Dorsolateral prefrontal cortex (tissue), 120 donors: ENCODE measurements at regions of chr17 and their contacts with region 1.

Region 1: GRCh38 chr17:42405963-42406495 is 17.0 kb downstream of the CAVIN1 start:
- DNase-seq: peak; percentile 80 to 89 (median 86)
- H3K4me3 ChIP-seq: no peak overlapping the region
- H3K27ac ChIP-seq: peak overlapping the region in 57 of 59 donors; percentile 48 to 99 (median 93)
- H3K27me3 ChIP-seq: peaks cover 0 to 4% (median 0%) of the 10 kb centered on the region in 45 donors
- CTCF ChIP-seq: peak; percentile 64 to 96 (median 89)

Region 2: GRCh38 chr17:42193969-42194899 is 211.8 kb before region 1 on chr17 and contains the start of gene GHDC:
- intact Hi-C with region 1: no loop called
- DNase-seq: peak; percentile 75 to 92 (median 90)
- H3K4me3 ChIP-seq: peak within 1 kb of the TSS; percentile 50 to 98 (median 85)
- H3K27ac ChIP-seq: peak within 1 kb of the TSS in 58 of 59 donors; percentile 5 to 95 (median 81)
- H3K27me3 ChIP-seq: no peaks in the 10 kb centered on the region
- CTCF ChIP-seq: peak in 26 of 56 donors; percentile 6 to 42 (median 19)
- total RNA-seq, gene GHDC: 17.6 to 38.2 (median 23.9) TPM

Region 3: GRCh38 chr17:42322382-42323267 is 83.4 kb before region 1 on chr17:
- intact Hi-C with region 1: loop called (anchors 1 to 2 kb)
- DNase-seq: peak; percentile 88 to 98 (median 94)
- H3K4me3 ChIP-seq: peak overlapping the region in 1 of 59 donors; percentile 17
- H3K27ac ChIP-seq: peak overlapping the region in 40 of 59 donors; percentile 0 to 79 (median 38)
- H3K27me3 ChIP-seq: no peaks in the 10 kb centered on the region
- CTCF ChIP-seq: peak; percentile 95 to 100 (median 100)

Region 4: DNA sequence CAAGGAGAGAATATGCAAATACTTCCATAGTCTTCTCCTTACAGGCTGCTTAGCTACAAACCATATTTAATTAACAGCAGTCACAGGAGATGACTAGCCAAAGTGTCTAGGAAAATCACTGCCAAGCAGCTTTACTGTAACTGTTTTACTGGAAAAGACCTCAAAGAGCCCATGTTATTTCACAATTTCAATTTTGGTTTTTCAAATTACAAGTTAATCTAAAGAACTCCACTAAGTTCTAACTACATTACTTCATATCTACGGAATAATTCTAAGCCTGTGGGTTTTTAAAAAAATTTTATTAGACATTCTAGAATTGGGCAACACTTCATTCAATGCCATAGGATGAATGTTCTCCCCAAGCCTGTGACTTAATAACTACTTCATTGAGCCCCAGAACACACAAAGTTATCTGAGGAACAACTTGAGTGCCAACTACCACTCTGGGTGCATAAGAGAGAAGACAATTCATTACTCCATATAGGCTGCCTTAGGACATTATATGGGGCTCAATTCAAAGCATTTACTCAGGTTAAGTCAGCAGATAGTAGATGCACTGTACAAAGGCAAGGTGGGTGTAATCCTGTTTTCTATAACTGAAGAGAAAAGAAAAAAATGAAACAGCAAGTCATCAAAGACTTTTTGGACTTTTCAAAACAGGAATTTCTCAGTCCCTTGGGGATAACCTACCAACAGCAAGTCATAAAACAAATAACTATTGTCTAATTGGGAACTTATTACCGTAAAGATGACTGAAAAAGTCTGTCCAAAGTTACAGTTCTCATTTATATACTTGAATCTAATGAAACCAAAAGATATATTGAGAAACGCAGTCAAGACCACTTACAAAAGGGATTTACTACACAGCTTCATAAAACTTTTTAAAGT is 50.8 kb before region 1 on chr17:
- intact Hi-C with region 1: no loop called
- DNase-seq: no peak
- H3K4me3 ChIP-seq: no peak overlapping the region
- H3K27ac ChIP-seq: peak overlapping the region in 1 of 59 donors; percentile 16
- H3K27me3 ChIP-seq: no peaks in the 10 kb centered on the region
- CTCF ChIP-seq: no peak

Region 5: DNA sequence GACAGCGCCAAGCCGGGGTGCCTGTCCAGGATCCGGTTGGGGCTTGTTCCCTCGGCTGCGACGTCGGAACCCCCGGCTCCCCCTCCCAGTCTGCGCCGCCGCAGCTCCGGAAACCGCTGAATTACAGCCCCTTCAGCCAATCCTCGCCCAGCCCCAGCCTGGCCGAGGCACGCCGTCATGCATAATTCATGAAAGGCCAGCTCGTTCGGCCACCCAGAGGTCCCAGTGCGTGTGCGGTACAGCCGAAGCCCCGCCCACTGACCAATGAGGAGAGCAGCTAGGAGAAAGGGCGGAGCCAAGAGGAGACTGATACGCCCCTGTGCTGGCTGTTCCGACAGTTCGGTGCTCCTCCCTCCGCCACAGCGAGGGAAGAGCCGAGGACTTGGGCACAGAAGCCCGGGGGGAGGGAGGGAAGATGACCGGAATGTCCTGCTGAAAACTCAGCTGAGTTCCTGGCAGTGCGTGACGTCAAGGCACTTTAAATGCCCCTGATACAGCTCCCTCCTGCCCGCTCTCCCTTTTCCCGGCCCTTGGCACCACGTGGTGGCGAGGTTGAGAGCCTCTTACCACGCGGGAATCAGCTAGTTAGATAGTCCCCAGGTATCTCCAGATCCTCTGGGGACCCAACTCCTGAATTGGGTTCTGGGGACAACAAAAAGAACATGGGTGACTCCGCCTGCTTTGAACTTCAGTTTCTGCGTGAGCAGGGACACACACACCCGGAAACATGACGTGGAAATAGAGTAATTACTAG is 17.5 kb before region 1 on chr17 and contains the start of gene STAT3:
- intact Hi-C with region 1: loop called in 1 of 2 experiments (anchors 2 kb)
- DNase-seq: peak; percentile 100
- H3K4me3 ChIP-seq: peak within 1 kb of the TSS; percentile 77 to 100 (median 95)
- H3K27ac ChIP-seq: peak within 1 kb of the TSS; percentile 70 to 100 (median 98)
- H3K27me3 ChIP-seq: no peaks in the 10 kb centered on the region
- CTCF ChIP-seq: peak in 33 of 56 donors; percentile 4 to 61 (median 28)
- total RNA-seq, gene STAT3: 57.7 to 203 (median 98.0) TPM

Region 6: DNA sequence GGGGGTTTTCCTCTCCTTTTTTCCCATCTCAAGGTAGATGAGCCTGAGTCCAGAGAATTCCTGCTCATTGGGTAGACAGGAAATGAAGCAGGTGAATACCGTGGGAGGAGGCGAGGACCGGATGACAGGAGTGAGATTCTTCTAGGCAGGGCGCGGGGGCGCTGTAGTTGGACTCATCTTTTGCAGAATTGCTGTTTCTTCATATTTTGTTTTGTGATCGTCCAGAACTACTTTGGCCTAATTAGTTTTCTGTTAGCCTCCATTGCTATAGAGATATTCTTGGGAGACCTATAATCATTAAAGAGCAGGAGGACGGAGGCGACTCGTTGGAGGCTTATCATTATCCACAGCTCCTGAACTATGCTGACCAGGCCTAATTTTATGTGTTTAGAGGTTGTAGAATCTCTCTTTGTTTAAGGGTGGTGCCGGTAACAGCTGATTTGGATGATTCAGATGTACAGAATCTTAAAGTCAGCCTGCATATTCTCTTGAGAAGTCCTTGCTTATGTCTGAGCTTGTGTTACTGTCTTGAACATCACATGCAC is 53.3 kb after region 1 on chr17:
- intact Hi-C with region 1: loop called in 1 of 2 experiments (anchors 2 kb)
- DNase-seq: peak; percentile 62 to 85 (median 74)
- H3K4me3 ChIP-seq: peak overlapping the region; percentile 57 to 98 (median 86)
- H3K27ac ChIP-seq: peak overlapping the region; percentile 80 to 99 (median 96)
- H3K27me3 ChIP-seq: no peaks in the 10 kb centered on the region
- CTCF ChIP-seq: peak in 47 of 56 donors; percentile 3 to 62 (median 41)

Region 7: DNA sequence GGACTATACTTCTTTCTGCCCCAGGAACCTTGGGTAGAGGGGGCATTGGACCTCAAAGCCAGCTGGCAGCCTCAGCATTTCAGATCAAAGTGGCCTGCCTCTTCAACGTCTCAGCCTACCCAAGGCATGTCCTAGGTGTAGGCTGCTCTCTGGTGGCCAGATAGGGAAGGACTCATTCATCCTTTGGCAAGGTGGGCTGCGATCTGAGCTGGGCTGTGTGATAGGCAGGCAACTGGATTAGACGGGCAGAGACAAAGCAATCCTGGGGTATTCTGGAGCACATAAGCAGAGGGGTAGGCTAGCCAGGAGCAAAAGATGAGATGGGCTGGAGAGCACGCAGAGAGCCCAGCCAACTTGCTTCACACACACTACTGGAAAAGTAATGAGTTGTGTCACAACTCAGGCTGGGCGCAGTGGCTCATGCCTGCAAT is 121.3 kb after region 1 on chr17:
- intact Hi-C with region 1: loop called in 1 of 2 experiments (anchors 5 kb)
- DNase-seq: peak in 6 of 10 donors; percentile 30 to 73 (median 60)
- H3K4me3 ChIP-seq: no peak overlapping the region
- H3K27ac ChIP-seq: peak overlapping the region in 45 of 59 donors; percentile 0 to 86 (median 60)
- H3K27me3 ChIP-seq: no peaks in the 10 kb centered on the region
- CTCF ChIP-seq: peak; percentile 53 to 84 (median 74)

Region 8: GRCh38 chr17:42536048-42536371 is 130.0 kb after region 1 on chr17 and contains the start of gene NAGLU:
- intact Hi-C with region 1: loop called in 1 of 2 experiments (anchors 5 kb)
- DNase-seq: peak; percentile 92 to 98 (median 95)
- H3K4me3 ChIP-seq: peak within 1 kb of the TSS; percentile 48 to 82 (median 74)
- H3K27ac ChIP-seq: peak within 1 kb of the TSS; percentile 83 to 100 (median 97)
- H3K27me3 ChIP-seq: no peaks in the 10 kb centered on the region
- CTCF ChIP-seq: peak in 15 of 56 donors; percentile 0 to 38 (median 18)
- total RNA-seq, gene NAGLU: 7.5 to 45.5 (median 18.3) TPM